ENCODE measurements at regions of chr7 and their contacts with region 1.

Region 1: GRCh38 chr7:95205665-95206225 is 118.6 kb downstream of the PON1 start:
- DNase-seq: no peak
- ATAC-seq: no peak
- H3K4me3 ChIP-seq: no peak overlapping the region
- H3K27ac ChIP-seq: no peak overlapping the region
- H3K4me1 ChIP-seq: peaks cover 2% of the 10 kb centered on the region
- H3K27me3 ChIP-seq: no peaks in the 10 kb centered on the region

Region 2: DNA sequence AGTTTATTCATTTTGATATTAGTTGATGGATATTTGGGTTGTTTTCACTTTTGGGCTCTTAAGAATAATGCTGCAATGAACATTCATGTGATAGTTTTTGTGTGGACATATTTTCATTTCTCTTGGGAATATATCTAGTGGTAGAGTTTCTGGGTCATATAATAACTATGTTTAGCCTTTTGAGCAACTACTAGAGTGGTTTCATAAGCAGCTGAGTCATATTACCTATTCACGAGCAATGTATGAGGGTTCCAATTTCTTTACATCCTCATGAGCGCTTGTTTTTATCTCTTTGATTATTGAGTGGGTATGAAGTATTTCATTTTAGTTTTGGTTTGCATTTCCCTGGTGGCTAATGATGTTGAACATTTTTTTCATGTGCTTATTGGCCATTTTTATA is 64.0 kb before region 1 on chr7:
- intact Hi-C with region 1: no loop called
- DNase-seq: no peak
- ATAC-seq: no peak
- H3K4me3 ChIP-seq: no peak overlapping the region
- H3K27ac ChIP-seq: no peak overlapping the region
- H3K4me1 ChIP-seq: no peaks in the 10 kb centered on the region
- H3K27me3 ChIP-seq: no peaks in the 10 kb centered on the region

Region 3: DNA sequence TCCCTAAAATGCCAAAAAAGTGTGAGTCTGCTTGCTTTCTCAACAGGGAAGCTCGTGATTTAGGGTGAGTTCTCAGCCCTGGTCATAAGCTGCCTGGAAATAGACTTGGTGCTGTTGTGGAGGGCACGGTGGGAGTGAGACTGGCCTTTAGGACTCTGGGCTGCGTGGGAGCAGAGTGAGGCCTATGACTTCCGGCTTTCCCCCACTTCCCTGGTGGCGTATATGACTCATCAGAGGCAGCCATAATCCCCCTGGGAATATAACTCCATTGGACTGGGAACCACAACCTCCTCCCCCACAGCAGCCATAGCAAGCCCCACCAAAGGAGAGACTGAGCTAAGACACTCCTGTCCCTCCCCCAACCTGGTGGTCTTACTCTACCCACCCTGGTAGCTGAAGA is 23.6 kb after region 1 on chr7:
- intact Hi-C with region 1: loop called in 1 of 4 experiments (anchors 2 kb)
- DNase-seq: no peak
- ATAC-seq: no peak
- H3K4me3 ChIP-seq: no peak overlapping the region
- H3K27ac ChIP-seq: no peak overlapping the region
- H3K4me1 ChIP-seq: no peaks in the 10 kb centered on the region
- H3K27me3 ChIP-seq: no peaks in the 10 kb centered on the region

Region 4: DNA sequence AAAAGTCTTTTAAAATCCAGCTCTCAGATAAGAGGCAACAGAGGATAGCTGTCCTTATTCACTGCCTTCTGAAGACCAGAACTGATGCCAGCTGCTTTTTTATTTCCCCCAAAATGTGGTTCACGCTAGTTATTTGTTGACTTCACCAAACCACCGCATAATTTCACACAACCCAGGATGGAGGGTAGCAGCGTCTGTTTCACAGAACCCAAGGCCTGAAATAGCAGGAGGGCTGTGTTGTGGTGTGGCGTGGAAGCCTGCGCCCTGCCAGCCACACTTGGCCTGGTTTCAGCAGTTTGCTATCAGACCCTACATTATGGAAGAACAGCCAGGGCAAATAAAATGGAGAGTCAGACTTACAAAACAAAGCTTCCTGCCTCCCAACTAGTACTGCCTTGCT is 722.0 kb after region 1 on chr7:
- intact Hi-C with region 1: no loop called
- DNase-seq: peak; percentile 19 to 69 (median 63)
- ATAC-seq: peak; percentile 76 to 89
- H3K4me3 ChIP-seq: no peak overlapping the region
- H3K27ac ChIP-seq: peak overlapping the region; percentile 6
- H3K4me1 ChIP-seq: peaks cover 4% of the 10 kb centered on the region
- H3K27me3 ChIP-seq: no peaks in the 10 kb centered on the region